Natural killer cell (primary cell): ENCODE measurements at regions of chr1 and their contacts with region 1.

Region 1: DNA sequence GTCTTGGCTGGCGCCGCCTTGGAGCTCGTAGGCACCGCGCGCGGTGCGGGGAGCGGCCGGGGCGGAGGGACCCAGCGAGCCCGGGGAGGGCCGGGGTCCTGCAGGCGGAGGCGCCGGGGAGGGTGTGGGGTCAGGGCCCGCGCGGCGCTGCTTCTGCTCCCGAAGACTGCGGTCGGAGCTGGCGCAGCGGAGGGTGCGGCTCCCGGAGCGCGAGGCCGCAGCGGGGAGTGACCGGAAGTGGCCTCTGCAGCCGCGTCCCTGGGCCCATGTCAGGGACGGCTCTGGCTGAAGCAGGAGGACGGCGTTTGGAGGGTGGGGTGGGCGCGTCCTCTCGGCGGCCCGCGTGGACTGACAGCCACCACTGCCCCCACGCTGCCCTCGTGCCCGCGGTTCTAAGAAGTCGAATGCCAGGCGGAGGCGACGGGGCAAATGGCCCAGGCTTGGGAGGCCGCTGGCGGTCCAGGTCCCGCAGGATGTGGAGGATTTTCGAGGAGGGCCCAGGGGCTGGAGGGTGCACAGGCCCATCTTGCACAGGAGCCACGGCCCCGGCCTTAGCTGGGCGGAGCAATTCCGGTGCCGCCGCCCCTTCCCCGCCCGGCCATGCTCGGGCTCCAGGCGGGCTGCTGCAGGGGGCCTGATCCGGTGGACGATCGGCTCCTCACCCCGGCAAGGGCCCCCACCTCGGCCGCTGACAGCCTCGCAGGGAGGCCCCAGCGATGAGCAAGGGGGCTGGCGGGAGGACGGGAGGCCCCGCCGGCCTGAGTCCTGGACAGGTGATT is 7.7 kb upstream of the ZNF669 start:
- DNase-seq: no peak
- ATAC-seq: peak; percentile 46 to 64 (median 56)
- H3K4me3 ChIP-seq: peak overlapping the region; percentile 35
- H3K4me3 Mint-ChIP-seq: peak overlapping the region; percentile 65
- H3K27ac ChIP-seq: no peak overlapping the region
- H3K27ac Mint-ChIP-seq: no peak overlapping the region
- H3K4me1 ChIP-seq: peaks cover 16% of the 10 kb centered on the region
- H3K4me1 Mint-ChIP-seq: peaks cover 7 to 10% of the 10 kb centered on the region in 2 donors
- H3K27me3 ChIP-seq: peaks cover 27% of the 10 kb centered on the region
- H3K27me3 Mint-ChIP-seq: peaks cover 39 to 41% of the 10 kb centered on the region in 2 donors
- CTCF ChIP-seq: no peak

Region 2: GRCh38 chr1:247531923-247532322 is 420.0 kb after region 1 on chr1:
- intact Hi-C with region 1: loop called (anchors 5 kb)
- DNase-seq: no peak
- ATAC-seq: no peak
- H3K4me3 ChIP-seq: no peak overlapping the region
- H3K4me3 Mint-ChIP-seq: no peak overlapping the region
- H3K27ac ChIP-seq: no peak overlapping the region
- H3K27ac Mint-ChIP-seq: no peak overlapping the region
- H3K4me1 ChIP-seq: no peaks in the 10 kb centered on the region
- H3K4me1 Mint-ChIP-seq: no peaks in the 10 kb centered on the region
- H3K27me3 ChIP-seq: no peaks in the 10 kb centered on the region
- H3K27me3 Mint-ChIP-seq: peaks cover 0 to 6% of the 10 kb centered on the region in 2 donors
- CTCF ChIP-seq: no peak